Gastrocnemius medialis (tissue), 4 donors: ENCODE measurements at regions of chr1 and their contacts with region 1.

Region 1: GRCh38 chr1:244970661-244971551 is 106.6 kb upstream of the HNRNPU start:
- DNase-seq: peak; percentile 93 to 97
- ATAC-seq: peak; percentile 78 to 83
- H3K4me3 ChIP-seq: peak overlapping the region; percentile 67 to 84 (median 79)
- H3K27ac ChIP-seq: peak overlapping the region; percentile 98 to 100 (median 98)
- H3K4me1 ChIP-seq: peaks cover 20 to 22% of the 10 kb centered on the region in 2 donors
- H3K27me3 ChIP-seq: no peaks in the 10 kb centered on the region
- CTCF ChIP-seq: peak; percentile 29 to 75 (median 63)
- POLR2A ChIP-seq: peak; percentile 73 to 80

Region 2: GRCh38 chr1:244835276-244836134 is 135.4 kb before region 1 on chr1 and contains the start of gene COX20:
- in situ Hi-C with region 1: loop called in 2 of 4 experiments (anchors 5 to 10 kb)
- intact Hi-C with region 1: loop called (anchors 1 kb)
- DNase-seq: peak; percentile 74 to 88
- ATAC-seq: peak; percentile 70 to 80
- H3K4me3 ChIP-seq: peak within 1 kb of the TSS; percentile 68 to 81 (median 76)
- H3K27ac ChIP-seq: peak within 1 kb of the TSS; percentile 96 to 99 (median 99)
- H3K4me1 ChIP-seq: peaks cover 11 to 33% of the 10 kb centered on the region in 2 donors
- H3K27me3 ChIP-seq: no peaks in the 10 kb centered on the region
- CTCF ChIP-seq: peak in 1 of 5 experiments; percentile 14
- POLR2A ChIP-seq: peak; percentile 65 to 66
- total RNA-seq, gene COX20: 22.7 to 72.0 (median 35.4) TPM

Region 3: GRCh38 chr1:246454655-246455054 is 1483.7 kb after region 1 on chr1:
- in situ Hi-C with region 1: no loop called
- intact Hi-C with region 1: no loop called
- DNase-seq: no peak
- ATAC-seq: peak; percentile 42 to 71
- H3K4me3 ChIP-seq: no peak overlapping the region
- H3K27ac ChIP-seq: peak overlapping the region in 1 of 4 donors; percentile 40
- H3K4me1 ChIP-seq: peaks cover 25 to 31% of the 10 kb centered on the region in 2 donors
- H3K27me3 ChIP-seq: no peaks in the 10 kb centered on the region
- CTCF ChIP-seq: no peak
- POLR2A ChIP-seq: no peak